Activated CD4-positive, alpha-beta memory T cell treated with anti-CD3 and anti-CD28 coated beads, Interleukin-2, amount 10 ng/mL, durations not matched to agents 7 days and 5 days (primary cell): ENCODE measurements at regions of chr19 and their contacts with region 1.

Region 1: GRCh38 chr19:12681074-12681951 is at the start of gene DHPS:
- DNase-seq: peak; percentile 94
- H3K4me3 Mint-ChIP-seq: peak within 1 kb of the TSS; percentile 94
- H3K27ac Mint-ChIP-seq: peak within 1 kb of the TSS; percentile 95
- H3K4me1 Mint-ChIP-seq: peaks cover 28% of the 10 kb centered on the region
- H3K27me3 Mint-ChIP-seq: no peaks in the 10 kb centered on the region
- total RNA-seq, gene DHPS: 106 to 113 TPM

Region 2: DNA sequence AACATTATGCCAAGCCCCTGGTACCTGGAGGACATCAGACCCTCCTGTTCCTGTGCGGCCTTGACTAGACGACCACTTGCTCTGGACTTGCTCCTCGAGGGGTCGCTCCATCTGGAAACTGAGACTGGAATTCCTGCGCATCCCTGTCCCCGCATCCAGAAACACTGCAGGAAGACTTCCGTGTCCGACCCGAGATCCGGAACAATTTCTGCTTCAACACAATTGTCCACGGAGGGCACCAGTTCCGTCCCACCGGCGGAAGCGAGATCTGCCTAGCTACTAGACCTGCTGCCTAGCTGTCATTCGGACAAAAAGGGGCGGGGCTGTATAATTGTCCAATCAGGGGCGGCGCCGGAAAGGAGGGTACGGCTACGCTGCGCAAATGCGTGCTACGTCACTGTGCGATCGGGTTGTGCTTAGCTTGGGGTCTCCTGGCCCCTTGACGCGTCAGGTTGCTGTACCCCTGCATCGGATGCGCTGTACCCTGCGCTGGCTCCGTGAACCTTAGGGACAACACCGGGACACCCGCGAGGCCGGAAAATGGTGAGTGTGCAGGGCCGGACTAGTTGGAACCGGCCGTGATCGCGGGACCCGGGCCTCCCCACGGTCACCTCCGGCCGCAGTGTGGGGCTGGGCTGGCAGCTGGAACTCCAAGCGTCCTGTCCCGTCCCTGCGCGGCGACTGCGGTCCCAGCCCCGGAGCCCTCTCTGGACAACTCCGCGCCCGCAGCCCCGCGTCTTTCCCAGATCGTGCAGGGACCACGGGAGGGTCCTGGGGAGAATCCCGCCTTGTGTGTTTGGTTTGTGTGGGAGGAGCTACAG is 70.6 kb before region 1 on chr19 and contains the starts of genes ZNF490 and ZNF791:
- CTCF ChIA-PET with region 1: interaction called, 6 read pairs
- POLR2A ChIA-PET with region 1: interaction called, 12 read pairs
- DNase-seq: peak; percentile 98
- H3K4me3 Mint-ChIP-seq: peak within 1 kb of the TSS; percentile 100
- H3K27ac Mint-ChIP-seq: peak within 1 kb of the TSS; percentile 99
- H3K4me1 Mint-ChIP-seq: peaks cover 48% of the 10 kb centered on the region
- H3K27me3 Mint-ChIP-seq: no peaks in the 10 kb centered on the region
- total RNA-seq, gene ZNF490: 16.9 to 17.1 TPM
- total RNA-seq, gene ZNF791: 39.9 to 44.3 TPM

Region 3: DNA sequence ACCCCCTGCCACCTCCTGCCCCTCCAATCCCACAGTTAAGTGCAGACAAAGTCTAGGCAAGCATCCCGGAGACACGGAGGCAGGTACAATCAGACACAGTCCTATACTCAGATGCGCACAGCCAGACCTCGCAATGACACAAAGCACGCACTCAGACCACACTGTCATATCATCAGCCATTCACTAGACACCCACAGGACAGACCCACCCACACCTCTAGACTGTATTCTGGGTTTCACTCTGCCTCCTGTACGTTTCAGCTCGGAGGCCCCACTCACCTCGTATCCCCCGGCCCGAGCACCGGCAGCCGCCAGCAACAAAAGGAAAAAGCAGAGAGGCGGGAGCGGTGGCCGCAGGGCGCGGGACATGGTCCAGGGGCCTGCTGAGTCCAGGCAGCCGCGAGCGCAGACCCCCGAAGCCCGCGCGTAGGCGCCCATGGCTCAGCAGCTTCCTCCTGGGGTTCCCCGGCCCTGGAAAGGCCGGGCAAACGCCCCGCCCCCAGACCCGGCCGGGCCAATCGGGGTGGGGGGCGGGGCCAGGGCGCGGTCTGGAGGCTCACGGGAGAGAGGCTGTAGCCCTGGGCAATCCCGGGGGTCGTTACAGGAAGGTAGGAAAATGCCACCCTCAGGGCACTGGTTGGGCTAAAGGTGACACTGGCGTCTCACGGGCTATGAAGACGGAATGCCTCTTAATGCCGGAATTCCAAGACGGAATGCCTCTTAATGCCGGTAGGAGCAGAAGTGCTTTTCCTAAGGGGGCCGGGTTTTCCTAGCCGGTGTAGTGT is 14.9 kb before region 1 on chr19 and contains the starts of genes MAN2B1 and WDR83:
- CTCF ChIA-PET with region 1: interaction called, 11 read pairs
- POLR2A ChIA-PET with region 1: interaction called, 23 read pairs
- DNase-seq: peak; percentile 80
- H3K4me3 Mint-ChIP-seq: peak within 1 kb of the TSS; percentile 92
- H3K27ac Mint-ChIP-seq: peak within 1 kb of the TSS; percentile 97
- H3K4me1 Mint-ChIP-seq: peaks cover 64% of the 10 kb centered on the region
- H3K27me3 Mint-ChIP-seq: no peaks in the 10 kb centered on the region
- total RNA-seq, gene MAN2B1: 146 to 150 TPM
- total RNA-seq, gene WDR83: 16.9 to 21.3 TPM

Region 4: GRCh38 chr19:12696366-12697335 is 15.3 kb after region 1 on chr19 and contains the start of gene FBXW9:
- CTCF ChIA-PET with region 1: interaction called, 12 read pairs
- POLR2A ChIA-PET with region 1: interaction called, 23 read pairs
- DNase-seq: peak; percentile 97
- H3K4me3 Mint-ChIP-seq: peak within 1 kb of the TSS; percentile 89
- H3K27ac Mint-ChIP-seq: peak within 1 kb of the TSS; percentile 95
- H3K4me1 Mint-ChIP-seq: peaks cover 24% of the 10 kb centered on the region
- H3K27me3 Mint-ChIP-seq: no peaks in the 10 kb centered on the region
- total RNA-seq, gene FBXW9: 5.2 to 5.3 TPM

Region 5: GRCh38 chr19:12801466-12802266 is 120.4 kb after region 1 on chr19 and contains the starts of genes PRDX2 and THSD8:
- CTCF ChIA-PET with region 1: no interaction called
- POLR2A ChIA-PET with region 1: no interaction called
- DNase-seq: peak; percentile 83
- H3K4me3 Mint-ChIP-seq: peak within 1 kb of the TSS; percentile 87
- H3K27ac Mint-ChIP-seq: peak within 1 kb of the TSS; percentile 64
- H3K4me1 Mint-ChIP-seq: peaks cover 37% of the 10 kb centered on the region
- H3K27me3 Mint-ChIP-seq: no peaks in the 10 kb centered on the region
- total RNA-seq, gene PRDX2: 234 to 240 TPM
- total RNA-seq, gene THSD8: 19.2 to 25.5 TPM